Naive thymus-derived CD4-positive, alpha-beta T cell (primary cell): ENCODE measurements at regions of chr4 and their contacts with region 1.

Region 1: GRCh38 chr4:145557720-145558119 is 61.5 kb upstream of the MMAA start:
- DNase-seq: peak; percentile 1 to 49 (median 38)
- ATAC-seq: peak; percentile 94
- H3K4me3 ChIP-seq: no peak overlapping the region
- H3K4me3 Mint-ChIP-seq: no peak overlapping the region
- H3K27ac ChIP-seq: no peak overlapping the region
- H3K27ac Mint-ChIP-seq: no peak overlapping the region
- H3K4me1 ChIP-seq: no peaks in the 10 kb centered on the region
- H3K4me1 Mint-ChIP-seq: peaks cover 0 to under 1% (median under 1%) of the 10 kb centered on the region in 7 donors
- H3K27me3 ChIP-seq: peaks cover 0 to 2% of the 10 kb centered on the region in 2 donors
- H3K27me3 Mint-ChIP-seq: peaks cover 0 to 21% (median 3%) of the 10 kb centered on the region in 5 donors

Region 2: DNA sequence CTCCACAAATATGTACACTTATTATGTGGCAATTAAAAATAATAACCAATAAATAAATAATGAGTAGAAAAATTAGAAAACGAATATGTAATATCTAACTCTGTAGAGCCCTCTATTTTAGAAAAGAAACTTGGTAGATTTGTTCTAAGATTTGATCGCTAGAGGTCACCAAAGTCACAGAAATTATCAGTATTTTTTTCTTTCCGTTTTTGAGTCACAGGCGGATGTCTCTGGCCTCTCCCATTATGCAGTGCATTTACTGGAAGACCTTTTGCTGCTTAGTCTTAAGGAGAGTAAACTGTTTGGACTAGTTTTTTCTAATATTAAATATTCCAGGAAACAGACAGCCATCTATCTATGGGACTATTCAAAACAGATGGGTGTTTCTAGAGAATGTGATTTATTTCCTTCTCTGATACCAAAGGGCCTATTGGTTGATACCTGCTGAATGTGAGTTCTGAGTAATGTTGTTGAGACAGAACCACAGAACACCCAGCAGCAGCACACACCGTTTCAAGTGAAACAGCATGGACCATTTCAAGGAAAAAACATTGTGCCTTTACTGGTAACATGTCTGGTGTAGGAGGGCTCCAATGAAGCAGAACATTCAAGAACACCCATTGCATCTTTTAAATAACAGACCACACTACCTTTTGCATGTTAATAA is 1383.2 kb before region 1 on chr4:
- CTCF ChIA-PET with region 1: no interaction called
- POLR2A ChIA-PET with region 1: no interaction called
- intact Hi-C with region 1: loop called in 1 of 2 experiments (anchors 1 kb)
- DNase-seq: peak in 7 of 9 donors; percentile 10 to 62 (median 45)
- ATAC-seq: peak; percentile 63
- H3K4me3 ChIP-seq: no peak overlapping the region
- H3K4me3 Mint-ChIP-seq: peak overlapping the region in 1 of 10 donors; percentile 44
- H3K27ac ChIP-seq: no peak overlapping the region
- H3K27ac Mint-ChIP-seq: peak overlapping the region in 3 of 9 donors; percentile 25 to 84 (median 41)
- H3K4me1 ChIP-seq: peaks cover 0 to 3% of the 10 kb centered on the region in 2 donors
- H3K4me1 Mint-ChIP-seq: peaks cover 0 to 29% (median 4%) of the 10 kb centered on the region in 7 donors
- H3K27me3 ChIP-seq: no peaks in the 10 kb centered on the region
- H3K27me3 Mint-ChIP-seq: peaks cover 0 to 11% (median 9%) of the 10 kb centered on the region in 5 donors

Region 3: GRCh38 chr4:145154573-145154972 is 403.1 kb before region 1 on chr4:
- CTCF ChIA-PET with region 1: no interaction called
- POLR2A ChIA-PET with region 1: no interaction called
- intact Hi-C with region 1: loop called in 1 of 2 experiments (anchors 2 kb)
- DNase-seq: peak in 1 of 9 donors; percentile 11
- ATAC-seq: peak; percentile 45
- H3K4me3 ChIP-seq: no peak overlapping the region
- H3K4me3 Mint-ChIP-seq: no peak overlapping the region
- H3K27ac ChIP-seq: no peak overlapping the region
- H3K27ac Mint-ChIP-seq: peak overlapping the region in 1 of 9 donors; percentile 38
- H3K4me1 ChIP-seq: no peaks in the 10 kb centered on the region
- H3K4me1 Mint-ChIP-seq: peaks cover 0 to 26% (median 4%) of the 10 kb centered on the region in 7 donors
- H3K27me3 ChIP-seq: no peaks in the 10 kb centered on the region
- H3K27me3 Mint-ChIP-seq: no peaks in the 10 kb centered on the region

Region 4: GRCh38 chr4:145216535-145216934 is 341.2 kb before region 1 on chr4:
- CTCF ChIA-PET with region 1: no interaction called
- POLR2A ChIA-PET with region 1: no interaction called
- intact Hi-C with region 1: loop called in 1 of 2 experiments (anchors 1 kb)
- DNase-seq: peak in 1 of 9 donors; percentile 11
- ATAC-seq: no peak
- H3K4me3 ChIP-seq: no peak overlapping the region
- H3K4me3 Mint-ChIP-seq: no peak overlapping the region
- H3K27ac ChIP-seq: no peak overlapping the region
- H3K27ac Mint-ChIP-seq: no peak overlapping the region
- H3K4me1 ChIP-seq: no peaks in the 10 kb centered on the region
- H3K4me1 Mint-ChIP-seq: peaks cover 0 to 4% (median 0%) of the 10 kb centered on the region in 7 donors
- H3K27me3 ChIP-seq: no peaks in the 10 kb centered on the region
- H3K27me3 Mint-ChIP-seq: peaks cover 4 to 23% (median 11%) of the 10 kb centered on the region in 5 donors

Region 5: GRCh38 chr4:145234091-145234706 is 323.5 kb before region 1 on chr4:
- CTCF ChIA-PET with region 1: no interaction called
- POLR2A ChIA-PET with region 1: no interaction called
- intact Hi-C with region 1: loop called (anchors 1 kb)
- DNase-seq: peak; percentile 7 to 56 (median 46)
- ATAC-seq: peak; percentile 98
- H3K4me3 ChIP-seq: no peak overlapping the region
- H3K4me3 Mint-ChIP-seq: no peak overlapping the region
- H3K27ac ChIP-seq: no peak overlapping the region
- H3K27ac Mint-ChIP-seq: no peak overlapping the region
- H3K4me1 ChIP-seq: no peaks in the 10 kb centered on the region
- H3K4me1 Mint-ChIP-seq: no peaks in the 10 kb centered on the region
- H3K27me3 ChIP-seq: no peaks in the 10 kb centered on the region
- H3K27me3 Mint-ChIP-seq: peaks cover 0 to 16% (median 0%) of the 10 kb centered on the region in 5 donors

Region 6: DNA sequence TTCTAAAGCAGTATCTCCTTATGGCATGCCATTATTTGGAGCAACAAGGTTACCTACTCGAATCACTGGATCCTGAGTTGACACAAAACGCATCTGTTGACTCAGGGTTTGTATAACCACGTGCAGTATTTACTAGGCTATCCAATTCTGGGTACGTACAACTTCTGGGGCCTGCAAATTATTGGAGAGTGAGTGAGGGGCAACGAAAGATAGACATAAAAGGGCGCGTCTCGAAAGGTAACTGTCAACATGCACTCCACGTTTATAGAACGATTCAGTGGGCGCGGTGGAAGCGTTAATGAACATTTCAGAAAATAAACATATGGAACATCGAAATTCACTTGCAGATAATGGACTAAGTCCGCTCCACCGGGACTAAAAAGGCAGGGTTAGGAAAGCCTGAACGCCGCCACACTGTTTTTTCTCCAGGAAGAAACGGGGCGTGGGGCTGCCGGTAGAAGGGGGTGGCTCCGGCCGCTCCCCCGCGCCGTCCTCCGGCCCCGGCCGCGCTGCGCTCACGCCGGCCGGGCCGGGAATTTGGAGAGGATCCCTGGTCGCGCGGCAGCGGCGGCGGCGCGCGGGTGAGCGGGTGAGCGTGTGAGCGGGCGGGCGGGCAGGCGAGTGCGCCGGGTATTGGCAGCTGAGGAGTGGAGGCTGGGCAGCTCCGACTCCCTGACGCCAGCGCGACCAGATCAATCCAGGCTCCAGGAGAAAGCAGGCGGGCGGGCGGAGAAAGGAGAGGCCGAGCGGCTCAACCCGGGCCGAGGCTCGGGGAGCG is 76.4 kb before region 1 on chr4 and contains the start of gene SMAD1:
- CTCF ChIA-PET with region 1: no interaction called
- POLR2A ChIA-PET with region 1: no interaction called
- intact Hi-C with region 1: loop called in 1 of 2 experiments (anchors 5 kb)
- DNase-seq: peak in 7 of 9 donors; percentile 11 to 53 (median 18)
- ATAC-seq: peak; percentile 76
- H3K4me3 ChIP-seq: peak within 1 kb of the TSS; percentile 58
- H3K4me3 Mint-ChIP-seq: peak within 1 kb of the TSS in 7 of 10 donors; percentile 68 to 91 (median 87)
- H3K27ac ChIP-seq: no peak within 1 kb of the TSS
- H3K27ac Mint-ChIP-seq: peak within 1 kb of the TSS in 4 of 9 donors; percentile 6 to 71 (median 22)
- H3K4me1 ChIP-seq: peaks cover 0 to 4% of the 10 kb centered on the region in 2 donors
- H3K4me1 Mint-ChIP-seq: peaks cover 4 to 15% (median 10%) of the 10 kb centered on the region in 7 donors
- H3K27me3 ChIP-seq: peaks cover 0 to 4% of the 10 kb centered on the region in 2 donors
- H3K27me3 Mint-ChIP-seq: peaks cover 4 to 42% (median 31%) of the 10 kb centered on the region in 5 donors
- total RNA-seq, gene SMAD1: 0.29 to 13.5 (median 1.2) TPM